ENCODE measurements at regions of chr1 and their contacts with region 1.

Region 1: DNA sequence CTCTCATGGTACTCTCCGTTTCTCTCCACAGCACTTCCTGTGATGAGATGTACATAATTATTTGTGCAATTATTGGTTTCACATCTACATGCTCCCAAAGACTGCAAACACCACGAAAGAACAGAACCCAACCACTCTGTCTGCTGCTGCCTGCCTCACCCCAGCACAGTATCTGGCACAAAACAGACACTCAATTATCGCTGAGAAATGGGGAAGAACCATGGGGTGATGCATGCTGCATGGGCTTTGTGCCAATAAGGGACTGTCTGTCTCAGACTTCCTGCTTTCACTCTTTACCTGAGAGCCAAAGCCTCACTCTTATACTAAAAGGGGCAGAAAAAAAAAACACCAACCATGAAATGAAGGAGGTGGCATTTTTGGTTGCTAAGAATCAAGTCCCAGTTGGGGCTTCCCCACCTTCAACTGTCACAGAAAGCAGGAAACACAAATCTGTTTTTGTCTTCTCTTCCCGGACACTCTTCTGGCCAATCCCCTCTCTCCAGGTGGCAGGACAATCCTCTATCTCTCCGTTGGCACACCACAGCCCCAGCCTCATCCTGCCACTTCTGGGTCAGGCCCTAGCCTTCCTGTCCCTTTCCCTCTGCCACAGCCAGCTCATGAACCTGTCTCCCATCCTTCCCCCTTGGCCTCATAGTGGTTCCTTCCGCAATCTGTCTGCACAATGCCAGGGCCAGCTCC is 82.0 kb downstream of the TGFBR3 start:
- DNase-seq: peak; percentile 92
- H3K4me3 Mint-ChIP-seq: peak overlapping the region; percentile 60
- H3K27ac Mint-ChIP-seq: peak overlapping the region; percentile 98
- H3K4me1 Mint-ChIP-seq: peaks cover 31% of the 10 kb centered on the region
- H3K27me3 Mint-ChIP-seq: no peaks in the 10 kb centered on the region

Region 2: GRCh38 chr1:90335558-90335957 is 1468.4 kb before region 1 on chr1:
- CTCF ChIA-PET with region 1: no interaction called
- intact Hi-C with region 1: no loop called
- DNase-seq: no peak
- H3K4me3 Mint-ChIP-seq: no peak overlapping the region
- H3K27ac Mint-ChIP-seq: no peak overlapping the region
- H3K4me1 Mint-ChIP-seq: peaks cover 3% of the 10 kb centered on the region
- H3K27me3 Mint-ChIP-seq: no peaks in the 10 kb centered on the region

Region 3: DNA sequence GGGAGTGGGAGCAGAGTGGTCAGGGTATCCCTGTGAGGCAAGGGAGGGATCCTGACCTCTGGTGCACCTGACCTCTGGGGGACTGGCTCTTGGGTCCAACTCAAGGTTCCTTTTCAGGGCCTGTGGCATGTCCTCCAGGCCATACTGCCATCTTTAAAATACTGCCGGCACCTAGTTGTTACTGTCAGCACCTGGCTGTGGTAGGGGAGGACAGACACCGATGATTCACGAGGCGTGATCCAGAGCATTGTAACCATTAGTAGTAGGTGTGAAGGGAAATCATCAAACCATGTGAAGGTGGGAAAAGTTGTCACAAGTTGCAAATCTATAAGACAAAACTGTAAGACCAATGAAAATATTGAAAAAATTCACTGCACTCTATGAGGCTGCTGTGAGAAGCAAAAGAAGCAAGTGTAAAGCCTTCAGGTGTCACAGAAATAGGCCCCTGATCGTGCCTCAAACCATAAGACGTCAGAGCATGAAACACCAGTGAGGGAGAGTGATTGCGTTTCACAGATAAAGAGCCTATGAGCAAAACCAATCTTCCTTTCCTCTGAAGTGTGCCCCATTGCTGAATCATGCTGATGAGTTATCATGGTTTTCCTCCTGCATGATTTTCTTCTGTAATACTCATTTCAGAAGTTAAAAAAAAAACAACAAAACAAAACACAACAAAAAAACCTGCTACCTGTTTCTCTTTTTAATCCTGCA is 248.0 kb before region 1 on chr1:
- CTCF ChIA-PET with region 1: interaction called, 3 read pairs
- intact Hi-C with region 1: loop called (anchors 1 kb)
- DNase-seq: peak; percentile 84
- H3K4me3 Mint-ChIP-seq: peak overlapping the region; percentile 26
- H3K27ac Mint-ChIP-seq: peak overlapping the region; percentile 90
- H3K4me1 Mint-ChIP-seq: peaks cover 68% of the 10 kb centered on the region
- H3K27me3 Mint-ChIP-seq: no peaks in the 10 kb centered on the region

Region 4: GRCh38 chr1:91732291-91733107 is 71.5 kb before region 1 on chr1:
- CTCF ChIA-PET with region 1: interaction called, 3 read pairs
- intact Hi-C with region 1: loop called (anchors 1 kb)
- DNase-seq: peak; percentile 24
- H3K4me3 Mint-ChIP-seq: no peak overlapping the region
- H3K27ac Mint-ChIP-seq: peak overlapping the region; percentile 64
- H3K4me1 Mint-ChIP-seq: peaks cover 30% of the 10 kb centered on the region
- H3K27me3 Mint-ChIP-seq: no peaks in the 10 kb centered on the region

Region 5: GRCh38 chr1:91846007-91846617 is 42.1 kb after region 1 on chr1:
- CTCF ChIA-PET with region 1: no interaction called
- intact Hi-C with region 1: no loop called
- DNase-seq: no peak
- H3K4me3 Mint-ChIP-seq: no peak overlapping the region
- H3K27ac Mint-ChIP-seq: no peak overlapping the region
- H3K4me1 Mint-ChIP-seq: peaks cover 13% of the 10 kb centered on the region
- H3K27me3 Mint-ChIP-seq: no peaks in the 10 kb centered on the region

Region 6: DNA sequence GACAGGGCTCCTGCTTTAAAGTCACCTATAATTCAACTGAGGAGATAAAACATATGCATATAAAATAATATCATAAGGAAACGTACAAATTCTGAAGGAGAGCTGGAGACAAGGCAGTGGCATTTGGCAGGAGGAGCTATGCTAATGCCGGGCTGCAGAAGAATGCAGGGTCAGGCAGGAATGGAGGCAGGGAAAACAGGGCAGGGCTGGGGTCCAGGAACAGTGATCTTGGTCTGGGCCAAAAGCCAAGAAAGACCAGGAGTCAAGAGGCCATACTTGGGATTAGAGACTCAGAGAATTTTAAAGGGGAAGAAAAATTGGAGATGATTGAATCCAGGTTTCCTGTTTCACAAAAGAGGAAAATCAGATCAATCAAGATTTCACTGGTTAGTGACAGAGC is 125.3 kb after region 1 on chr1:
- CTCF ChIA-PET with region 1: no interaction called
- intact Hi-C with region 1: loop called (anchors 5 kb)
- DNase-seq: no peak
- H3K4me3 Mint-ChIP-seq: no peak overlapping the region
- H3K27ac Mint-ChIP-seq: no peak overlapping the region
- H3K4me1 Mint-ChIP-seq: peaks cover 1% of the 10 kb centered on the region
- H3K27me3 Mint-ChIP-seq: no peaks in the 10 kb centered on the region

Region 7: DNA sequence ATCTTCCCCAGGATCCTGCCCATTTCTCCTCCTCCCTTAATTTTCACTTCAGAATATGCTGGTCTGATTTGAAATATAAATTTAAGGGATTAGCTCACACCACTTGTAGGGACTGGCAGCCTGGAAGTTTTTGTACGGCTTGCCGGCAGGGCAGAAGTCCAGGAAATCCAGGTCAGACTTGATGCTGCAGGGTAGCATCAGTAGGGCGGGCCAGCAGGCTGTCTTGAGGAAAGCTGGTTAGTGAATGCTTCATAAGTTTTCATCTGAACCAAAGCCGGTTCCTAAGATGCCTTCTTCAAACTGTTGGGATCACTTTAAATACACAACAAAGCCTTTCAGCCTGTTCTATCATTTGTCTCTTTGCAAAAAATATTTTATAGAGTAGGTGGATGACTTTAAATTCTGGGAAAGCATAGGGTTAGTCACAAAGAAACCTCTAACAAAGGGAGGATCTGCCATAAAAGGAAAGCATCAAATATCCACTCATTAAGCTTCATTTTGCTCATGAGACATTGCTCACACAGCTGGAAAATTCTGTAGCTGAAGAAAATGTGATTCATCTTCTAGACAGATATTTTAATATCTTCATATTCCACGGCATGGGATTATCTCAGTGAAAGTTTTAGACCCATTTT is 773.4 kb after region 1 on chr1:
- CTCF ChIA-PET with region 1: no interaction called
- intact Hi-C with region 1: loop called (anchors 2 kb)
- DNase-seq: no peak
- H3K4me3 Mint-ChIP-seq: peak overlapping the region; percentile 92
- H3K27ac Mint-ChIP-seq: peak overlapping the region; percentile 97
- H3K4me1 Mint-ChIP-seq: peaks cover 62% of the 10 kb centered on the region
- H3K27me3 Mint-ChIP-seq: no peaks in the 10 kb centered on the region